WTC11 (cell line): ENCODE measurements at regions of chr14 and their contacts with region 1.

Region 1: GRCh38 chr14:36553656-36554260 is 28.7 kb downstream of the NKX2-8 start:
- DNase-seq: no peak
- ATAC-seq: peak; percentile 79
- H3K4me3 Mint-ChIP-seq: no peak overlapping the region
- H3K27ac Mint-ChIP-seq: no peak overlapping the region
- H3K4me1 Mint-ChIP-seq: peaks cover 14% of the 10 kb centered on the region
- H3K27me3 Mint-ChIP-seq: peaks cover 3% of the 10 kb centered on the region; the same call in 1 of the 2 replicates
- CTCF ChIP-seq: peak; percentile 27; the same call in 1 of the 2 replicates

Region 2: DNA sequence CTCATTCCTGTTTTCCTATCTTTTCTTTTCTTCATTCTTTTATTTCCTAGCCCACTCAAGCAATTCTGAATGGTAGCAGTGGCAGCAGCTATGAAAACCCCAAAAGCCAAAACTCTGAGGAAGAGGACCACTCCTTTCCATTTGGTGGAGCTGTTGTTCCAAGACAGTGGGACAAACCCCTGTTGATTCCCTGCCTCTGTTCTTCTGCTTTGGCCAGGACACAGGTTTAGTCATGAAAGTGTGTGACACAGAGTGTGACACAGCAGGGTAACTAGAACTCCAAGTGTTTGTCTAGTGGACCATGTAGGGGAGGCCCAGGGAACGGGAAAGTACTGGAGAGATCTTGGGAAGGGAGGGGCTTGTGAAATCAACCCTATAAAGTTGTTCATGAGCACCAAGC is 448.4 kb before region 1 on chr14:
- CTCF ChIA-PET with region 1: interaction called, 11 read pairs
- POLR2A ChIA-PET with region 1: no interaction called
- DNase-seq: peak; percentile 21
- ATAC-seq: peak; percentile 92
- H3K4me3 Mint-ChIP-seq: no peak overlapping the region
- H3K27ac Mint-ChIP-seq: no peak overlapping the region
- H3K4me1 Mint-ChIP-seq: no peaks in the 10 kb centered on the region
- H3K27me3 Mint-ChIP-seq: no peaks in the 10 kb centered on the region
- CTCF ChIP-seq: no peak

Region 3: DNA sequence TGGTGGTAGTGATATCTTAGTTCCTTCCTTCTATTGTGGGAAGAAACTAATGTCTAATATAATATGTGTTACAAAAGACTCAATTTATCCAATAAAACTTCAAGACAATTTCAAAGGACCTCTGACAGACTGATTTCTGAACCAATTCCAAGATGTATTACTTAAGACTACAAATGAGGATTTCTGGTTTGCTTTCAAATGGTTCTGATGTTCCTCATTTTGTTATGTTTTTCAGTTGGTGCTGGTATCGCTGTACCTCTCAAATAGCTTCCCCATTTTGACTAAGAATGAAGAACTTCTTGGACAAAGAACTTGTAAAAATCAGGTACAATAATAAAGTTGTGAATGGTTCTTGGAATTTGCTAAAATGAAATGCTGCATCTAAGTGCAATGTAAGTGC is 213.9 kb before region 1 on chr14:
- CTCF ChIA-PET with region 1: no interaction called
- POLR2A ChIA-PET with region 1: no interaction called
- DNase-seq: no peak
- ATAC-seq: no peak
- H3K4me3 Mint-ChIP-seq: no peak overlapping the region
- H3K27ac Mint-ChIP-seq: no peak overlapping the region
- H3K4me1 Mint-ChIP-seq: no peaks in the 10 kb centered on the region
- H3K27me3 Mint-ChIP-seq: peaks cover 5% of the 10 kb centered on the region; the same call in 1 of the 2 replicates
- CTCF ChIP-seq: no peak

Region 4: DNA sequence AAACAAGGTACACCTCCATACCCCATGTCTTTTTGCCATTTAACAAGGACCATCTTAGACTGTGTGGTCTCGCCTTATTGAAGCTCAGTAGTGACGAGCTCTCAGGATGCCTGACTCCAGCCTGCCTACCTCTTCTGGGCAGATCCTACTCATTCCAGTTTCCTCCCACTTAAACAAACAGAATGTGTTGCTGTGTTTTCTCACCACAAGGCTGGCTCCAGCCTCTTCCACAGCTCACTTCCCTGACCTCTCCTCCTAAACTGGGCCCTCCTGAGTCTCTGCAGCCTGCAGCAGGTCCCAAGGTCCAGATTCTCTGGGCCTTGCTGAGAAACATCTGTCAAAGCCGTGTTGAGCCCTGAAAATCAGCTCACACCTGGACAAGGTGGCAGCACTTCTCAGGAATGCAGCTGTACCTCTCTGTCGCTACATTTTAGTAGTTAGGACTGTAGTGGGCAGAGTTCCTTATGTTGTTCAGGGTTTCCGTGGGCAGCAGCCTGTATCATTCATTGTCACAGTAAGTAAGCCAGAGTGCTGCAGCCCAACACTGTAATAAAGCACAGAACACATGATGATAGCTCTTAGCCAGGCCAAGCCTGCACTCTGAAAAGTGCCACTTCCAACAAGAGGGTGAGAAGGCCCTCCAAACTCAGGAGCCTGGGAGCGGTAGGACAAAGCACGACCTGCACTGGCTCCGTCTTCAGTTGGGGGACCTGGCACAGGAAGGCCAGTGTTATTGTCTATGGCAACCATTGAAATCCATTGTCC is 102.3 kb before region 1 on chr14:
- CTCF ChIA-PET with region 1: interaction called, 11 read pairs
- POLR2A ChIA-PET with region 1: no interaction called
- DNase-seq: no peak
- ATAC-seq: no peak; the same call in 1 of the 2 replicates
- H3K4me3 Mint-ChIP-seq: no peak overlapping the region
- H3K27ac Mint-ChIP-seq: no peak overlapping the region
- H3K4me1 Mint-ChIP-seq: peaks cover 11% of the 10 kb centered on the region
- H3K27me3 Mint-ChIP-seq: peaks cover 63% of the 10 kb centered on the region
- CTCF ChIP-seq: no peak

Region 5: DNA sequence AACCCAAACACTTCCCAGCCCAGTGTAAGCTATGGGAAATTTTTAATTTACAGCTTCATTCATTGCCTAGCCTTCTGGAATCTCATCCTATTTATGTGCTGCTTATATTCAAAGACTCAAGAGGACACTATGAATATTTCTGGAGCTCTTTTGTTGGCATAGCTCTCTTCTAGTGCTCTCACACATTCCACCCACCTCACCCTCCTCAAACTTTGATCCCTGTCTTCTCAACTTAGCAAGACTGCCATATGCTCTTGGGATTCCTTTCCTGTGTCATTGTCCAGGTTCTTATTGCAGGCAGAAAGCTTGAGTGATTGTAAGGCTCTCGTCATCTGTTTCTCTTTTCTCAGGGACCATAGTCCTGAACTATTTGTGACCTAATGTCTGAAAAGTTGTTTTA is 15.7 kb before region 1 on chr14:
- CTCF ChIA-PET with region 1: interaction called, 32 read pairs
- POLR2A ChIA-PET with region 1: no interaction called
- DNase-seq: no peak
- ATAC-seq: no peak
- H3K4me3 Mint-ChIP-seq: no peak overlapping the region
- H3K27ac Mint-ChIP-seq: no peak overlapping the region
- H3K4me1 Mint-ChIP-seq: no peaks in the 10 kb centered on the region
- H3K27me3 Mint-ChIP-seq: peaks cover 55% of the 10 kb centered on the region
- CTCF ChIP-seq: no peak

Region 6: DNA sequence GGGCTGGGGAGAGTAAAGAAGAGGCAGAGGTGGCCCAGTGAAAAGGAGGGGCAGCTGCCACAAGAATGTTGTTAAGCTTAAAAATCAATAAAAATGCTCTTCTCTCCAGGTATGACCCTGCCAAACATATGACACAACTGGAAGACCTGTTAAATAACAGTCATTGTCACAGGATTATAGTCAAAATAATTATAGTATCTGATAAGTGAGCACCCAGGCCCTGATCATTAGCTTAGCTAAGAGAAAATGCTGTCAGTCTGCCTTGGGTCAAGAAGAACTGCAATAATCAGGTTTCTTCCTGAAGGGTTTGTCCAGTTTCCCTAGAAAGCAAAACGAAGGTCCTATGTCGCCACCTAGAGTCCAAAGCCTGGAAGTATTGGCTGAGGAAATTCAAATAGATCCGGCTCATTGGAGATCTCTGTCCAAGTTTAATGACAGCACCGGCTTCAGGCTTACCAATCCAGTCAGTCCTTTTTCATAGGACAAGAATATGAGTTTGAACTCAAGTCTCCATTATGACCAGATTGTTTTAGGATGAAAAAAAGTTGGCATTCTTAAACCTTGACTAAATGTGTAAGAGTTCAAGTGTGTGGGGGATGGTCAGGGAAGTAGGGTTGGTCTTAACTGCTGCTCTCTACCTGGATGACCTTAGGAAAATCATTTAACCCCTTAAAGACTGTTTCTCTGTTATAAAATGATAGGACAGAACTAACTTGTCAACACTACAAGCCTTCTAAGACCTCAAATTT is 51.2 kb after region 1 on chr14:
- CTCF ChIA-PET with region 1: interaction called, 121 read pairs
- POLR2A ChIA-PET with region 1: interaction called, 7 read pairs
- DNase-seq: peak; percentile 60
- ATAC-seq: peak; percentile 83
- H3K4me3 Mint-ChIP-seq: peak overlapping the region; percentile 57
- H3K27ac Mint-ChIP-seq: no peak overlapping the region
- H3K4me1 Mint-ChIP-seq: peaks cover 12% of the 10 kb centered on the region
- H3K27me3 Mint-ChIP-seq: peaks cover 39% of the 10 kb centered on the region
- CTCF ChIP-seq: peak; percentile 48

Region 7: GRCh38 chr14:36773136-36773540 is 219.4 kb after region 1 on chr14:
- CTCF ChIA-PET with region 1: no interaction called
- POLR2A ChIA-PET with region 1: no interaction called
- DNase-seq: no peak
- ATAC-seq: peak; percentile 73
- H3K4me3 Mint-ChIP-seq: no peak overlapping the region
- H3K27ac Mint-ChIP-seq: no peak overlapping the region
- H3K4me1 Mint-ChIP-seq: peaks cover 10% of the 10 kb centered on the region
- H3K27me3 Mint-ChIP-seq: no peaks in the 10 kb centered on the region
- CTCF ChIP-seq: no peak

Region 8: DNA sequence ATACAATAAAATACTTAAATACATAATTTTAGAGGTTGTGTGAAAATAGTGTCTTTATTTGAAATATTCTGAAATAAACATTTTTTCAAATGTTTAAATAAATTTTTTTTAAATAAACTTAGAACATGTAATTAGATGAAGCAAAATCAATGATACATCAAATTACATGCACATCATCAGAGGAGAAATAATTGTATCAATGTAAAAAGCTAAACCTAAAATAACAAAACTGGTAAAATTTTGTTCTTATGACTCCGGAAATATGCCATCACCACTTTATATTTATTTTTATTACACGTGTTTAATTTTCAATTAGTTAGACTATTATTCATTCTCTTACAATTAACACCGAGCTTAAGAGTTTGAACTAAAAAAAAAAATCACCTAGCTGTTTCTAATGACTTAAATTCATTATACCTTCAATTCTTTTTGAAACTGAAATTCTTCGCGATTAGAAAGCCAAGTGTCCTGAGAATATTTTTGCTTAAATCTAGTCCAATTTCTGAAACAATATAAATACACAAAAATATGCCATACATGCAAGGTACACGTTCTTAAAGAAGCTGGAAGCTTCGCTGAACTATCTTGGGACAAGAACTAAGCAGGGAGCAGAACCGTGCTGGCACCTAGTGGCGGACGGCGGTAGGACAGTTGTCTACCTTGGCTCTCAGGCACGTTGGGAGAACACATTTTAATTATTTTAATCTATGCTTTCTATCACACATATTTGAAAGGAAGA is 388.2 kb after region 1 on chr14:
- CTCF ChIA-PET with region 1: interaction called, 20 read pairs
- POLR2A ChIA-PET with region 1: no interaction called
- DNase-seq: peak; percentile 82
- ATAC-seq: peak; percentile 88
- H3K4me3 Mint-ChIP-seq: no peak overlapping the region
- H3K27ac Mint-ChIP-seq: no peak overlapping the region
- H3K4me1 Mint-ChIP-seq: peaks cover 5% of the 10 kb centered on the region; the same call in 1 of the 2 replicates
- H3K27me3 Mint-ChIP-seq: no peaks in the 10 kb centered on the region
- CTCF ChIP-seq: peak; percentile 95